H1 (cell line): ENCODE measurements at regions of chr19 and their contacts with region 1.

Region 1: GRCh38 chr19:49570138-49570856 is 10.1 kb downstream of the NOSIP start:
- DNase-seq: peak in 1 of 2 experiments; percentile 70
- H3K4me3 ChIP-seq: no peak overlapping the region
- H3K27ac ChIP-seq: no peak overlapping the region
- H3K4me1 ChIP-seq: peaks cover 2 to 5% (median 4%) of the 10 kb centered on the region in 4 experiments; a peak in 5 of 7 replicates
- H3K27me3 ChIP-seq: no peaks in the 10 kb centered on the region
- CTCF ChIP-seq: peak; percentile 35 to 99 (median 99)
- EP300 ChIP-seq: no peak
- POLR2A ChIP-seq: no peak
- RAD21 ChIP-seq: peak; percentile 93 to 95

Region 2: GRCh38 chr19:49473868-49474544 is 96.3 kb before region 1 on chr19 and contains the start of gene FLT3LG:
- CTCF ChIA-PET with region 1: interaction called, 20 read pairs
- POLR2A ChIA-PET with region 1: no interaction called
- DNase-seq: peak in 1 of 2 experiments; percentile 90
- H3K4me3 ChIP-seq: peak within 1 kb of the TSS in 2 of 4 experiments; percentile 10 to 58; a peak in 3 of 8 replicates
- H3K27ac ChIP-seq: no peak within 1 kb of the TSS
- H3K4me1 ChIP-seq: peaks cover 0 to 5% (median under 1%) of the 10 kb centered on the region in 4 experiments; a peak in 3 of 7 replicates
- H3K27me3 ChIP-seq: peaks cover 0 to 5% (median 0%) of the 10 kb centered on the region in 4 experiments; a peak in 4 of 7 replicates
- CTCF ChIP-seq: peak; percentile 86 to 92 (median 88)
- EP300 ChIP-seq: no peak
- POLR2A ChIP-seq: no peak
- RAD21 ChIP-seq: peak; percentile 36 to 49; a peak in 3 of 4 replicates
- total RNA-seq, gene FLT3LG: 1.6 and 2.6 TPM in 2 replicates

Region 3: DNA sequence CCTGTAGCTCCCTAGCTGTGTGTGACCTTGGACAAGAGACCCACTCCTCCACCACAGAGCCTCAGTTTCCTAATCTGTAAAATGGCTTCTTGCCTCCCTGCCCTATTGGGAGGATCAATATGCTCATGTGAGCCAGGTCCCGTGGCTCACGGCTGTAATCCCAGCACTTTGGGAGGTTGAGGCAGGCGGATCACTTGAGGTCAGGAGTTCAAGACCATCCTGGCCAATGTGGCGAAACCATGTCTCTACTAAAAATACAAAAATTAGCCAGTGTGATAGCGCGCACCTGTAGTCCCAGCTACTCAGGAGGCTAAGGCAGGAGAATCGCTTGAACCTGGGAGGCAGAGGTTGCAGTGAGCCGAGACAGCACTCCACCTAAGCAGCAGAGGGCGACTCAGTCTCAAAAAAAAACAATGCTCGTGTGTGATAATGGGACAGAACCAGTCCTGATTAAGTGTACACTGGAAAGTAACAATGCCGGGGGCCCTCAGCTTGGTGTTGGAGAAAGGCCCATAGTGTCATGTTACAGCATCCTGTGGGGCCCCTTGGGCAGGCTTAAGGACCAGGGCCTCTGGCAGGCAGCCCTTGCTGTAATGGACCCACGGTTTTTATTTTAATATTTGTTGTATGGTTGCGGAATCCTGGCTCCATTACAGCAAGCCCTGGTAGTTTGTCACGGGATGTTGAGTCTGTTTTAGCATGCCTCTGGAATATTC is 67.3 kb before region 1 on chr19:
- CTCF ChIA-PET with region 1: interaction called, 23 read pairs
- POLR2A ChIA-PET with region 1: interaction called, 6 read pairs
- DNase-seq: no peak
- H3K4me3 ChIP-seq: no peak overlapping the region
- H3K27ac ChIP-seq: no peak overlapping the region
- H3K4me1 ChIP-seq: peaks cover 0 to 22% (median 17%) of the 10 kb centered on the region in 4 experiments; a peak in 6 of 7 replicates
- H3K27me3 ChIP-seq: no peaks in the 10 kb centered on the region
- CTCF ChIP-seq: peak; percentile 40 to 45 (median 41); a peak in 3 of 4 replicates
- EP300 ChIP-seq: no peak
- POLR2A ChIP-seq: no peak
- RAD21 ChIP-seq: peak; percentile 55 to 59

Region 4: GRCh38 chr19:49533551-49534488 is 36.5 kb before region 1 on chr19:
- CTCF ChIA-PET with region 1: interaction called, 33 read pairs
- POLR2A ChIA-PET with region 1: interaction called, 3 read pairs
- DNase-seq: peak in 1 of 2 experiments; percentile 96
- H3K4me3 ChIP-seq: peak overlapping the region; percentile 60 to 81 (median 72)
- H3K27ac ChIP-seq: no peak overlapping the region
- H3K4me1 ChIP-seq: peaks cover 0 to 9% (median 1%) of the 10 kb centered on the region in 4 experiments; a peak in 5 of 7 replicates
- H3K27me3 ChIP-seq: no peaks in the 10 kb centered on the region; a peak in 1 of 7 replicates
- CTCF ChIP-seq: peak; percentile 22 to 76 (median 53)
- EP300 ChIP-seq: no peak
- POLR2A ChIP-seq: no peak
- RAD21 ChIP-seq: no peak

Region 5: GRCh38 chr19:49555600-49556411 is 14.5 kb before region 1 on chr19:
- CTCF ChIA-PET with region 1: interaction called, 240 read pairs
- POLR2A ChIA-PET with region 1: interaction called, 26 read pairs
- DNase-seq: peak; percentile 88 to 95
- H3K4me3 ChIP-seq: peak overlapping the region; percentile 37 to 78 (median 64)
- H3K27ac ChIP-seq: peak overlapping the region; percentile 66; the same call in 1 of the 2 replicates
- H3K4me1 ChIP-seq: peaks cover 5 to 22% (median 14%) of the 10 kb centered on the region in 4 experiments
- H3K27me3 ChIP-seq: no peaks in the 10 kb centered on the region; a peak in 2 of 7 replicates
- CTCF ChIP-seq: no peak
- EP300 ChIP-seq: no peak
- POLR2A ChIP-seq: peak in 1 of 2 experiments; percentile 65; a peak in 2 of 3 replicates
- RAD21 ChIP-seq: no peak

Region 6: GRCh38 chr19:49655570-49656455 is 85.5 kb after region 1 on chr19:
- CTCF ChIA-PET with region 1: no interaction called
- POLR2A ChIA-PET with region 1: no interaction called
- DNase-seq: no peak
- H3K4me3 ChIP-seq: no peak overlapping the region
- H3K27ac ChIP-seq: no peak overlapping the region
- H3K4me1 ChIP-seq: peaks cover 0 to 14% (median 5%) of the 10 kb centered on the region in 4 experiments; a peak in 4 of 7 replicates
- H3K27me3 ChIP-seq: no peaks in the 10 kb centered on the region
- CTCF ChIP-seq: no peak
- EP300 ChIP-seq: no peak
- POLR2A ChIP-seq: no peak
- RAD21 ChIP-seq: no peak

Region 7: GRCh38 chr19:49746206-49747091 is 176.2 kb after region 1 on chr19:
- CTCF ChIA-PET with region 1: no interaction called
- POLR2A ChIA-PET with region 1: no interaction called
- DNase-seq: peak; percentile 97
- H3K4me3 ChIP-seq: peak overlapping the region in 1 of 4 experiments; percentile 9; a peak in 1 of 8 replicates
- H3K27ac ChIP-seq: no peak overlapping the region
- H3K4me1 ChIP-seq: no peaks in the 10 kb centered on the region; a peak in 2 of 7 replicates
- H3K27me3 ChIP-seq: no peaks in the 10 kb centered on the region
- CTCF ChIP-seq: peak; percentile 26 to 37 (median 29); a peak in 3 of 4 replicates
- EP300 ChIP-seq: no peak
- POLR2A ChIP-seq: no peak
- RAD21 ChIP-seq: peak; percentile 35 to 51; a peak in 3 of 4 replicates